WTC11 (cell line): ENCODE measurements at regions of chr22 and their contacts with region 1.

Region 1: GRCh38 chr22:19016081-19016766 is 80.1 kb upstream of the PRODH start:
- DNase-seq: no peak
- ATAC-seq: no peak
- H3K4me3 Mint-ChIP-seq: no peak overlapping the region
- H3K27ac Mint-ChIP-seq: no peak overlapping the region
- H3K4me1 Mint-ChIP-seq: no peaks in the 10 kb centered on the region
- H3K27me3 Mint-ChIP-seq: no peaks in the 10 kb centered on the region; the same call in 1 of the 2 replicates
- CTCF ChIP-seq: no peak

Region 2: GRCh38 chr22:18973264-18974031 is 42.8 kb before region 1 on chr22:
- CTCF ChIA-PET with region 1: no interaction called
- POLR2A ChIA-PET with region 1: no interaction called
- DNase-seq: no peak
- ATAC-seq: no peak
- H3K4me3 Mint-ChIP-seq: no peak overlapping the region
- H3K27ac Mint-ChIP-seq: no peak overlapping the region
- H3K4me1 Mint-ChIP-seq: peaks cover 4% of the 10 kb centered on the region; the same call in 1 of the 2 replicates
- H3K27me3 Mint-ChIP-seq: 0 out of 2 replicates have a peak, but pooled peaks cover 3% of the 10 kb centered on the region
- CTCF ChIP-seq: no peak

Region 3: DNA sequence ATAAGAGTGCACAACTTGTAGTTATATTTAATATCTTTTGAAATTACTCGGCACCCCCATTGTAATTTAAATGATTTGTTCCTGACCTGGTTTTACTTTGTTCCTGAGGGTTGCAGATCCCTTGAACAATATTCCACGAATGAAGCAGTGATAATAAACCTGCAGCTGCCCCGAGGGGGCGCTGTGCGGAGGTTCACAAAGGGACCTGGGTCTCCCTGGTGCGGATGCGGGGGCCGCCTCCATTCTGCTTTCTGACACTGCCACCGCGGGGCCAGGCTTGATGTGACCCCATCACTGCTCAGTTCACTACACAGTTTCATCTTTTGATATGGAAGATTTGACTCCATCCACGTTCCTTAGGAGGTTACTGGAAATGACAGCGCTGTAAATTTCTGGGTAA is 17.2 kb before region 1 on chr22:
- CTCF ChIA-PET with region 1: interaction called, 14 read pairs
- POLR2A ChIA-PET with region 1: no interaction called
- DNase-seq: peak; percentile 87
- ATAC-seq: peak; percentile 93
- H3K4me3 Mint-ChIP-seq: no peak overlapping the region
- H3K27ac Mint-ChIP-seq: no peak overlapping the region
- H3K4me1 Mint-ChIP-seq: no peaks in the 10 kb centered on the region
- H3K27me3 Mint-ChIP-seq: no peaks in the 10 kb centered on the region; the same call in 1 of the 2 replicates
- CTCF ChIP-seq: peak; percentile 86